Uterus (tissue), 4 donors: ENCODE measurements at regions of chrX and their contacts with region 1.

Region 1: GRCh38 chrX:112800971-112801714 is 39.5 kb downstream of the AMOT start:
- DNase-seq: no peak
- H3K4me3 ChIP-seq: no peak overlapping the region
- H3K27ac ChIP-seq: no peak overlapping the region
- H3K4me1 ChIP-seq: no peaks in the 10 kb centered on the region
- H3K27me3 ChIP-seq: no peaks in the 10 kb centered on the region
- CTCF ChIP-seq: no peak
- POLR2A ChIP-seq: no peak

Region 2: GRCh38 chrX:112867570-112867969 is 66.4 kb after region 1 on chrX:
- intact Hi-C with region 1: loop called (anchors 2 kb)
- DNase-seq: no peak
- H3K4me3 ChIP-seq: no peak overlapping the region
- H3K27ac ChIP-seq: no peak overlapping the region
- H3K4me1 ChIP-seq: no peaks in the 10 kb centered on the region
- H3K27me3 ChIP-seq: no peaks in the 10 kb centered on the region
- CTCF ChIP-seq: no peak
- POLR2A ChIP-seq: no peak

Region 3: GRCh38 chrX:113059714-113060113 is 258.6 kb after region 1 on chrX:
- intact Hi-C with region 1: no loop called
- DNase-seq: no peak
- H3K4me3 ChIP-seq: no peak overlapping the region
- H3K27ac ChIP-seq: no peak overlapping the region
- H3K4me1 ChIP-seq: no peaks in the 10 kb centered on the region
- H3K27me3 ChIP-seq: peaks cover 0 to 6% of the 10 kb centered on the region in 2 donors
- CTCF ChIP-seq: no peak
- POLR2A ChIP-seq: no peak